ENCODE measurements at regions of chr11 and their contacts with region 1.

Region 1: GRCh38 chr11:74388678-74389327 is 9.4 kb downstream of the PGM2L1 start:
- DNase-seq: peak; percentile 34

Region 2: DNA sequence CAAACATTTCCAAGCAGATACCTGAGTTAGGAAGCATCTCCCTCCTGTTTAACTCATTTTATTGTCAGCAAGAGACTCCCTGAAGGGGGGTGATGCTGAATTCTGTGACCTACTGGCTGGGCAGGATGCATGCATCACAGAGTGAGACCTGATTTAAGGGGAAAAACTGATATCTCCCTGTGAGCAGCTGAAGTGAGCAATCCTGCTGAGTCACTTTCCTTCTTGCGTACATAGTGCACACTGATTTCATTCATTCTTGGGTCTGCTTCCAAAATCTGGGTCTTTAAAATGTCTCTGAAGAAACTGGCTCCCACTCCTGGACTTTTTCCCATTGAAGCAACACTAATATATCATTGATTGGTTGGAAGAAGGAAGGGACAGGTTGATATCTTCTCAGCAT is 100.6 kb before region 1 on chr11:
- CTCF ChIA-PET with region 1: no interaction called
- POLR2A ChIA-PET with region 1: no interaction called
- DNase-seq: no peak

Region 3: DNA sequence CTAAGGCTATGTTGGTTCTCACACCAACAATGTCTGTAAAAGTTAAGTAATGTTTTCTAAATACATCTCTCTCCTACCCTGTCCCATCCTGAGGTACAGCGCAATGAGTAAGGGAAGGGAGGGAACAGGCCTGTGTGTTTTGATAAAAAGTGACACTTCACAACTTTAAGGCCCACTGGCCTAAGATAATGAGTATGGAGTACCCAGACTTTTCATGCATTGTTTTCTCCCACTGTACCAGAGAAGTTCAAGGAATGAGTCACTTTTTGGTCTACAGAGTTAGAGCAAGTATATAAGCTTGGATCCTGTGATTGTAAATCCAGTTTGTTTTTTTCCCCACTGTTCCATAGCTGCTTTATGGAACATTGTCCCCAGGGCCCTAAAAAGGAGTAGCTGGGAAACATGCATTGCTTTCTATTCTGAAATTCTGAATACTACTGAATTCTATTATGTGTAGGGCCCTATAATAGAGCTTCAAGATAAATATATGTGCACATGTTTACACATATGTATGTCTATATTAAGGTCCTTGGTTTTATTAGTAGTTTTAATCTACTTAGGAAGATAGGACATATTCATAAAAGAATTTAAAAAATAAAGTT is 48.7 kb after region 1 on chr11:
- CTCF ChIA-PET with region 1: interaction called, 11 read pairs
- POLR2A ChIA-PET with region 1: no interaction called
- DNase-seq: no peak

Region 4: GRCh38 chr11:74443071-74443864 is 54.5 kb after region 1 on chr11:
- CTCF ChIA-PET with region 1: interaction called, 13 read pairs
- POLR2A ChIA-PET with region 1: interaction called, 5 read pairs
- DNase-seq: peak; percentile 35

Region 5: GRCh38 chr11:74478877-74479731 is 90.3 kb after region 1 on chr11:
- CTCF ChIA-PET with region 1: no interaction called
- POLR2A ChIA-PET with region 1: no interaction called
- DNase-seq: no peak